CD8-positive, alpha-beta T cell (primary cell): ENCODE measurements at regions of chrX and their contacts with region 1.

Region 1: DNA sequence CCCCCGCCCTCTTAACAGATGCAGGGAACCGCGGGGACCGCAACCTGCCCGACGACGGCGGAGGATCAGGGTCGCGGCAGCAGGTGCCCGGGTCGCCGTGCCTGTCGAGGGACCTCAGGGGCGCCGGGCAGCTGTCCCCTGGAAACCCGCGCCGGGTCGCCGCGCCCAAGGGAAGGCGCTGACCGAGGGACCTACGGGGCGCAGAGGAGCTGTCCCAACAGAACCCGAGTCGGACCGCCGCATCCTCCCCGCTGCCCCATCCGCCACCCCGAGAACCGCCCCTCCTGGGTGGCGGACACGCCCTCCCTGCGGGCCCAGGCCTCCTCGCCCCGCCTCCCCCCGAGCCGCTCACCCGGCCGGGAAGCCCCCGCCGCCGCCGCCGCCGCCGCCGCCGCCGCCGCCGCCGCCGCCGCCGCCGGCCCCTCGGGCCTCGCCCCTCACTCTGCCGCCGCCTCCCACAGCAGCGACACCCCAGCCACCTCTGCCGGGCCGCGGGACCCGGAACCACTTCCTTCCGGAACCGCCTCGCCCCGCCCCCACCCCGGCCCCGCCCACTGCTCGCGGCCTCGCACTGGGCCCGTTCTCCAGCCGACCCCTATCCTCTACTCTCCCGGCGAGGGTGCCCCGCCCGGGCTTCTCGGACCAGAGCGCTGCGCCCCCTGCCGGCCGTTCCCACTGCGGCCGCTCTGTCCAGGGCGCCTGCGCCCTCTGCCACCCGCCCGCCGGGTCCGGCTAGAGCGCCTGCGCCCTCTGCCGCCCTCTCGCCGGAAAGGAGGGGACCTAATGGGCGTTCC is at the start of gene BCLAF3:
- DNase-seq: peak; percentile 65 to 92 (median 83)
- ATAC-seq: peak; percentile 83
- H3K4me3 ChIP-seq: peak within 1 kb of the TSS; percentile 55 to 62
- H3K4me3 Mint-ChIP-seq: peak within 1 kb of the TSS; percentile 92
- H3K27ac ChIP-seq: peak within 1 kb of the TSS; percentile 48 to 76
- H3K27ac Mint-ChIP-seq: peak within 1 kb of the TSS; percentile 97
- H3K4me1 ChIP-seq: peaks cover 5% of the 10 kb centered on the region
- H3K4me1 Mint-ChIP-seq: peaks cover 22% of the 10 kb centered on the region
- H3K27me3 ChIP-seq: no peaks in the 10 kb centered on the region
- H3K27me3 Mint-ChIP-seq: no peaks in the 10 kb centered on the region
- CTCF ChIP-seq: peak; percentile 47
- total RNA-seq, gene BCLAF3: 4.4 to 5.3 TPM

Region 2: DNA sequence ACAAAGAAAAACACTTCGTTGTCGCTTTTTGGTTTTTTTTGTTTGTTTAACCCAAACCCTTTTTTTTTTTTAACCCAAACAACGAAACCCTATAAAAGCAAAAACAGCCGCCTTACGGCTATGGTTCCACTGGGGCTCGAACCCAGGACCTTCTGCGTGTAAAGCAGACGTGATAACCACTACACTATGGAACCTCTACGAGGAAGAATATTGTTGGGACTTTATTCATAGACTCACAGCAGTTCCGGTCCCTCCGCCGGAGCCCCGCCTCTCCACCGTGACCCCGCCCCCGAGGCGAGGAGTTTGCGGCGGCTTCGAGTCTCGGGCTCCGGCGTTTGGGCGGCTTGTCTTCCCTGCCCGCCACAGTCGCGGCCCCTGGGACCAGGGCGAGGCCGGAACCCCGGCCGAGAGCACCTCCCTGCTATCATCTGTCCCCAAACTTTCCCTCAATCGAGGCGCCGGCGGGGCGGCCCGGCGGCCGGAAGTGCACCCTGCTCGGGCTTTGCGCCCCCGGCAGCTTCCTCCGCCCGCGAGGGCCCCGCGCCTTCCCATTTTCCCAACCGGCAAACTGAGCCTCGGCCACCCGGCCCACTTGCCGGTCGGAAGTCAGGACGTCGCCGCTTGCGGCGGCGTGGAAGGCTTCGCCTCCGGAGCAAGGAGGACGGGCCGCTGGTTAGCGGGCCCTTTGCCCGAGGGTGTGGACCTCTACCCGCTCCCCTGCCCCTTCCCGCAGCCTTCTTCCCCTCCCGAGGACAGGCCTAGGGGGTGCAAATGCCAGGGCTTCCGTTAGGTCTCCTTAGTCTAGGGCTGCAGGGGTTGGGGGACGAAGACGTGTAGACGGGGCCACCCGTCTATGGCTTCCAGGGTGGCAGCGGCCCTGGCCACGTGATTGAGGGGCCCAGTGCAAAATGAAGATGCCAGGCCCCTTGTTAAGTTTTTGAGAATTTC is 1315.7 kb before region 1 on chrX:
- CTCF ChIA-PET with region 1: no interaction called
- POLR2A ChIA-PET with region 1: no interaction called
- intact Hi-C with region 1: loop called in 1 of 2 experiments (anchors 5 kb)
- DNase-seq: peak; percentile 66 to 88 (median 73)
- ATAC-seq: peak; percentile 90
- H3K4me3 ChIP-seq: peak overlapping the region; percentile 70 to 76
- H3K4me3 Mint-ChIP-seq: peak overlapping the region; percentile 81
- H3K27ac ChIP-seq: peak overlapping the region; percentile 76 to 84
- H3K27ac Mint-ChIP-seq: peak overlapping the region; percentile 89
- H3K4me1 ChIP-seq: no peaks in the 10 kb centered on the region
- H3K4me1 Mint-ChIP-seq: peaks cover 11% of the 10 kb centered on the region
- H3K27me3 ChIP-seq: no peaks in the 10 kb centered on the region
- H3K27me3 Mint-ChIP-seq: no peaks in the 10 kb centered on the region
- CTCF ChIP-seq: no peak

Region 3: GRCh38 chrX:19372170-19372546 is 618.6 kb before region 1 on chrX:
- CTCF ChIA-PET with region 1: no interaction called
- POLR2A ChIA-PET with region 1: no interaction called
- intact Hi-C with region 1: loop called in 1 of 2 experiments (anchors 1 kb)
- DNase-seq: peak; percentile 31 to 77 (median 63)
- ATAC-seq: peak; percentile 73
- H3K4me3 ChIP-seq: peak overlapping the region; percentile 22 to 51
- H3K4me3 Mint-ChIP-seq: peak overlapping the region; percentile 90
- H3K27ac ChIP-seq: no peak overlapping the region
- H3K27ac Mint-ChIP-seq: no peak overlapping the region
- H3K4me1 ChIP-seq: no peaks in the 10 kb centered on the region
- H3K4me1 Mint-ChIP-seq: peaks cover 5% of the 10 kb centered on the region
- H3K27me3 ChIP-seq: no peaks in the 10 kb centered on the region
- H3K27me3 Mint-ChIP-seq: no peaks in the 10 kb centered on the region
- CTCF ChIP-seq: peak; percentile 78

Region 4: DNA sequence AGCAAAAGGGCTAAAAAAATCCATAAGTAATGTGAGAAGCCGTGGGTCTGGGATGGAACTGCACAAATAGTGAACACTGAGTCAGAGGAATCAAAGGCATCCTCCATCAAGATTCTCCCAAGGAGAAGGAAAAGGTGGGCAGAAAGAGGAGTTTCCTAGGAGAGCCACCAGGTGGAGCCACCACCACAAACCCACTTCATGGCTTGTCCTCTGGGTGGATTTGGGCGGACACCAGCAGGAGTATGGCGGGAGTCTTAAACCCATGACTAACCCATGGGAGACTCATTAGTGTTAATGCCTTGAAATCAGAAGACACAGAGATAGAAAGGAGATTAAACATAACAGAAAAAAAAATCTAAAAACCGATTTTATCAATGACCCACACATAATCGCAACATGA is 251.1 kb before region 1 on chrX:
- CTCF ChIA-PET with region 1: no interaction called
- POLR2A ChIA-PET with region 1: no interaction called
- intact Hi-C with region 1: loop called in 1 of 2 experiments (anchors 5 kb)
- DNase-seq: peak in 7 of 9 experiments; percentile 10 to 71 (median 54)
- ATAC-seq: peak; percentile 44
- H3K4me3 ChIP-seq: no peak overlapping the region
- H3K4me3 Mint-ChIP-seq: no peak overlapping the region
- H3K27ac ChIP-seq: no peak overlapping the region
- H3K27ac Mint-ChIP-seq: peak overlapping the region; percentile 81
- H3K4me1 ChIP-seq: peaks cover 60% of the 10 kb centered on the region
- H3K4me1 Mint-ChIP-seq: peaks cover 76% of the 10 kb centered on the region
- H3K27me3 ChIP-seq: no peaks in the 10 kb centered on the region
- H3K27me3 Mint-ChIP-seq: no peaks in the 10 kb centered on the region
- CTCF ChIP-seq: peak; percentile 52

Region 5: GRCh38 chrX:19846995-19847790 is 143.6 kb before region 1 on chrX:
- CTCF ChIA-PET with region 1: no interaction called
- POLR2A ChIA-PET with region 1: no interaction called
- intact Hi-C with region 1: no loop called
- DNase-seq: peak in 3 of 9 experiments; percentile 14 to 37 (median 26)
- ATAC-seq: peak; percentile 59
- H3K4me3 ChIP-seq: no peak overlapping the region
- H3K4me3 Mint-ChIP-seq: peak overlapping the region; percentile 63
- H3K27ac ChIP-seq: peak overlapping the region in 1 of 2 experiments; percentile 56
- H3K27ac Mint-ChIP-seq: peak overlapping the region; percentile 89
- H3K4me1 ChIP-seq: peaks cover 13% of the 10 kb centered on the region
- H3K4me1 Mint-ChIP-seq: peaks cover 42% of the 10 kb centered on the region
- H3K27me3 ChIP-seq: no peaks in the 10 kb centered on the region
- H3K27me3 Mint-ChIP-seq: no peaks in the 10 kb centered on the region
- CTCF ChIP-seq: no peak

Region 6: DNA sequence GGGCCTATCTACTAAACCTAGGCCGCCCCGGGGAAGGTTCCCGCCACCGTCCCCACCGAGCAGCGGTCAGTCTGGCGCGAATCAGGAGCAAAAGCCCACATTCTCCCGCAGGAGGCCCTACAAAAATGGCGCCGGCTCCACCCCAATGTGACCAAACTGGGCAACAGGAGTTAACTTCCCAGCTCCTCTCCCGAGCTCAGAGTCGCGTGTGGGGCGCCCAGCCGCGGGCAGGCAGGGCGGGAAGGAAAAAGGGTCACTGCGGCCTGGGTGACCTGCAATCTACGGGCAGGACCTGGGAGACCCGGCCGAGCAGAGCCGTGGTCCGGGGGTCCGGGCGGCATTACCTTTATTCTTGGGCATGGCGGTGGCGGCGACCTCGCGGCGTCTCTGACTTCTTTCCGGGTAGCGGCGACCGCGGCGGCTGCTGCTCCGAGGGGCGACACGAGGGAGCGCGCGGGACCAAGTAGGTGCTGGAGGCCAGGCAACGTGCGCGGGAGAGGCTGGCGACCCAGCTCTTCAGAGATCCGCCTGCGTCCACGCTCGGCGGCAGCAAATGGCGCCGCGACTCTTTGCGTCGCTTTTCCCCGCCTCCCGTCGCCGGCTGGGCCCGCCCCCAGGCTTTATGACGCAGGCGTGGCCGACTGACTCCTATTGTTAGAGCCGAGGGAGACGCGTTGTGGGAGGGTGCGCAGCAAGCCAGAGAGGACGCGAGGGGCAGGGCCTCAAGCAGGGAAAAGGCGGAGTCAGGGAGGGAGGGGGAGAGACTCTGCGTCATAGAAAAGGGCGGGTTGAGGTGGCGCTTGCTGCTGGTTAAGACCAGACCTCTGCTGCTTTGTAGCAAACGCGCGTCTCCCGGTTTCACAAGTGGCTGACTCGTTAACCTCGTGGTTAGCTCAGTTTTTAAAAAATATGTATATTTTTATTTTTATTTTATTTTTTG is 150.8 kb after region 1 on chrX and contains the start of gene EIF1AX:
- CTCF ChIA-PET with region 1: no interaction called
- POLR2A ChIA-PET with region 1: no interaction called
- intact Hi-C with region 1: loop called (anchors 5 kb)
- DNase-seq: peak; percentile 88 to 99 (median 96)
- ATAC-seq: peak; percentile 98
- H3K4me3 ChIP-seq: peak within 1 kb of the TSS; percentile 73 to 91
- H3K4me3 Mint-ChIP-seq: peak within 1 kb of the TSS; percentile 85
- H3K27ac ChIP-seq: peak within 1 kb of the TSS; percentile 79 to 84
- H3K27ac Mint-ChIP-seq: peak within 1 kb of the TSS; percentile 89
- H3K4me1 ChIP-seq: peaks cover 15% of the 10 kb centered on the region
- H3K4me1 Mint-ChIP-seq: peaks cover 26% of the 10 kb centered on the region
- H3K27me3 ChIP-seq: no peaks in the 10 kb centered on the region
- H3K27me3 Mint-ChIP-seq: no peaks in the 10 kb centered on the region
- CTCF ChIP-seq: no peak
- total RNA-seq, gene EIF1AX: 71.7 to 73.3 TPM

Region 7: DNA sequence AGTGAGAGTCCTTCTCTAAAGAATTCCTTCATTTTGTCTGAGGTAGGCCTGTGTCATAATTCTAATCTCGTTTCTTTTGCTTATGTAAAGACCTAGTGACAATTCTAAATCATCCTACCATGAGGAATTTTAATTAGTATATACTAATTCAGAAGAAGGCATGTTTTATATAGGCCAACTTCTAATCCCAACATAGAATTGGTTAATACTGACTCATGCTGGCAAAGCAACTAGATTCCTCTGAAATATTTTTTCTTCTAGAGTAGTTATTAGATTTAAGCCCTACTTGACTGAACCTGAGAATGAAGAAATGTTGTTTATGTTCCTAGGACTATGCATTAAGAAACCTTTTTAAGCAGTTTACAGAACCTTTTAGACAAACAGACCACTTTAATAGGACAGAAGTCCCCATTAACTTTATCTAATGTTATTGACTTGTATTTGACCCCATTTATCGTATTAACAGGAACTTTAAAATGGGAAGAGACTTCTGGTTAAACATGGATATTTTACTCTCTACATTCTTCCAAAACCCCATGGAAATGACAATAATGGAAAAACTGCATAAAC is 207.0 kb after region 1 on chrX:
- CTCF ChIA-PET with region 1: no interaction called
- POLR2A ChIA-PET with region 1: no interaction called
- intact Hi-C with region 1: no loop called
- DNase-seq: no peak
- ATAC-seq: no peak
- H3K4me3 ChIP-seq: no peak overlapping the region
- H3K4me3 Mint-ChIP-seq: no peak overlapping the region
- H3K27ac ChIP-seq: no peak overlapping the region
- H3K27ac Mint-ChIP-seq: peak overlapping the region; percentile 87
- H3K4me1 ChIP-seq: no peaks in the 10 kb centered on the region
- H3K4me1 Mint-ChIP-seq: peaks cover 25% of the 10 kb centered on the region
- H3K27me3 ChIP-seq: no peaks in the 10 kb centered on the region
- H3K27me3 Mint-ChIP-seq: no peaks in the 10 kb centered on the region
- CTCF ChIP-seq: no peak